WTC11 (cell line): ENCODE measurements at regions of chr11 and their contacts with region 1.

Region 1: DNA sequence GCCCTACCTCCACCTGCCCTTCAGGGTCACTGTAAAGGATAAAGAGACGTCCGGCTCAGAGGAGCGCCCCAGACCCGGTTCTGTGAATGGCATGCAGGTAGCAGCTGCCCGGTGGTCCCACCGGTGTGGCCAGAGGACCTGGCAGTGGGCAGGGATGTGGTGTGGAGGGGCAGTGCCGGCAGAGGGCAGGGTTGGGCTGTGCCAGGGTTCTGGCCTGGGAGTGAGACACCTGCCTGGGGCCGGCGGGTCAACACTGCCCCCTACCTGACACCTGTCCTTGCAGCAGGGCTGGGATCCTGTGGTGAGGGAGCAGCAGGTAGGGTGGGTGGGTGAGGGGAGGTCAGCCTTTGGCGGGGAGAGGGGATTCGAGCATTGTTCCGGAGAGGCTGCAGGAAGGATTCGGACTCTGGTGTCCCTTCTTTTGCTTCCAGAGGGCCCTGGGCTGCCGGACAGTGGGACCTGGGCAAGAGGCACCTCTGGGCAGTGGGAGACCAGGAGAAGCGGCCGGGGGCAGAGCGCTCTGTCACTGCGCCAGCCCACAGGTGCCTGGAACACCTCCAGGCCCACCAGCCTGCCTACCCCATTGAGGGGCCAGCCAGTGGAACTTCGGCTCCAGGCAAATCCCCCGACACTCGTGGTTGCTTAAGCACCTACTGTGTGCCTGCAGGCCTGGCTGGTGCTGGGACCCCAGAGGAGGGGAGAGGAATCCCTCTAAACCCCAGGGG is 1.6 kb upstream of the PHLDA2 start:
- DNase-seq: peak; percentile 95
- ATAC-seq: peak; percentile 86
- H3K4me3 Mint-ChIP-seq: peak overlapping the region; percentile 72
- H3K27ac Mint-ChIP-seq: no peak overlapping the region
- H3K4me1 Mint-ChIP-seq: peaks cover 7% of the 10 kb centered on the region
- H3K27me3 Mint-ChIP-seq: peaks cover 42% of the 10 kb centered on the region
- CTCF ChIP-seq: peak; percentile 76

Region 2: DNA sequence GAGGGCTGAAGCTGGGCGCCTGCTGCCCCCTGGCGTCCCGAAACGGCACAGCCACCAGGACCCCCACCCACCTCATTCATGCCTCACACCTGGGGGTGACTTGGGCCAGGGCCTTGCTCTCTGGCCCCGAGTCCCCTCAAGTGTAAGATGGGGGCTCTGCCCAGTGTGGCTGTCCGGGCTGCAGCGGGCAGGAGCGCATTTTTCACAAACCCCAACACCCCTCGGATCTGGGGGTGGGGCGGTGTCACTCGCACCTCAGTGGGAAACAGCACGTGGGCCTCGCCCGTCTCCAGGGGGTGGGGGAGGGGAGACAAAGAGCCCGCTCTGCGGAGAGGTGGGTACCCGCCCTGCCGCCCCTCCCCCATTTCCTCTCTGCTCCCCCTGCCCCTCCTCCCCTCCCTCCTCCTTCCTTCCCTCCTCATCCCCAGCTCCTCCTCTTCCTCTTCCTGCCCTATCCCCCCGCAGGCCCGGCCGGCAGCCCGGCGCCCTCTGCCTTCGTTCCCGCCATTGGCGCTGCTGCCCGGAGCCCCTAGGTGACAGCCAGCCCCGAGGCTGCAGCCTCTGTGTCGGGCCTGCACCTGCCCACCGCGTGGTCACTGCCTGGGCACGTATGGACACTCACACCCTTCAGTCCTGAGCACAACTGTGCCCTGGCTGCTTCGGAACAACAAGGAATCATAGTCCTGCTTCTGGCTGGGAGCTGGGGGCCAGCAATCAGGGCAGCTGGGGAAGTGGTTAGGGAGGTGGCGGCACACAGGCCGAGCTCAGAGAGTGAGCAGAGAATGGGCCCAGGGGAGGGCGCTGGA is 38.4 kb before region 1 on chr11:
- CTCF ChIA-PET with region 1: interaction called, 68 read pairs
- POLR2A ChIA-PET with region 1: interaction called, 10 read pairs
- DNase-seq: peak; percentile 84
- ATAC-seq: peak; percentile 67
- H3K4me3 Mint-ChIP-seq: peak overlapping the region; percentile 68
- H3K27ac Mint-ChIP-seq: 0 out of 2 replicates have a peak overlapping the region, but pooled peaks have one; percentile 23
- H3K4me1 Mint-ChIP-seq: peaks cover 11% of the 10 kb centered on the region
- H3K27me3 Mint-ChIP-seq: peaks cover 56% of the 10 kb centered on the region
- CTCF ChIP-seq: peak; percentile 93

Region 3: GRCh38 chr11:2901854-2902783 is 28.7 kb before region 1 on chr11:
- CTCF ChIA-PET with region 1: interaction called, 19 read pairs
- POLR2A ChIA-PET with region 1: interaction called, 4 read pairs
- DNase-seq: peak; percentile 97
- ATAC-seq: peak; percentile 89
- H3K4me3 Mint-ChIP-seq: peak overlapping the region; percentile 66
- H3K27ac Mint-ChIP-seq: no peak overlapping the region
- H3K4me1 Mint-ChIP-seq: peaks cover 30% of the 10 kb centered on the region
- H3K27me3 Mint-ChIP-seq: peaks cover 59% of the 10 kb centered on the region
- CTCF ChIP-seq: no peak

Region 4: GRCh38 chr11:2945031-2945756 is 14.3 kb after region 1 on chr11:
- CTCF ChIA-PET with region 1: interaction called, 23 read pairs
- POLR2A ChIA-PET with region 1: interaction called, 5 read pairs
- DNase-seq: peak; percentile 76
- ATAC-seq: peak; percentile 78
- H3K4me3 Mint-ChIP-seq: peak overlapping the region; percentile 10; the same call in 1 of the 2 replicates
- H3K27ac Mint-ChIP-seq: peak overlapping the region; percentile 55; the same call in 1 of the 2 replicates
- H3K4me1 Mint-ChIP-seq: peaks cover 37% of the 10 kb centered on the region
- H3K27me3 Mint-ChIP-seq: no peaks in the 10 kb centered on the region
- CTCF ChIP-seq: no peak

Region 5: DNA sequence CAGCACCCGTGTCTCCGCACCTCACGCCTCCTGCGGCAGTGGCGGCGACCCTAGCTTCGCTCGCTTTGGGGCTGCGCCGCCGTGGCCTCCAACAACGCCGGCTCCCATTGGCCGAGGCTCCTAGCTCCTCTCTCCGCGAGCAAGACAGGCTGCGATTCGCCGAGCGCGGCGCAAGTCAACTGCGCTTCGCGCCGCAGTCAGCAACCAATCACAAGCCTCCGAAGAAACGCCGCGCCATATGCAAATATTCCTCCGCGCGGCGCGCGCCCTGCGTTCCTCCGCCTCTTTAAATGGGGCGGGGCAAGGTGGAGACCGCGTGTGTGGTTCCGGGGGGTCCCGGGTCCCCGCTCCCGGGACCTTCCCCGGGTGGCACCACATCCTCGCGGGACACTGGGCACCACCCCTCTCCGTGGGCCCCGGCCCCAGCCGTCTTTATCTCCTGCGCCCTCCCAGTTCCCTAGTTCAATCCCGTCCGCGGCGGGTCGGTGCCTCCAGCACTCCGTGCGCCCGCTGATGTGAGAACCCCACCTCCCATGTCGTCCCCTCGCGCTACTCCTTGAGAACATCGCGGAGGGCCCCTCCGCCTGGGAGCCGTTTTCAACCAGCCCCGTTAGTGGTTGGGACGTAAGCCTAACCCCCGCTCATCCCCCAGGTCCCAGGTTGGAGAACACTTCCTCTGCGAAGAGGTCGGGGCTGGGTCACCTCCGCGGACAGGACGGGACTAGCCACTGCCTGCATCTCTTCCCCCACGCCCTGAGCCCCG is 61.5 kb after region 1 on chr11 and contains the start of gene NAP1L4:
- CTCF ChIA-PET with region 1: interaction called, 11 read pairs
- POLR2A ChIA-PET with region 1: interaction called, 3 read pairs
- DNase-seq: peak; percentile 97
- ATAC-seq: peak; percentile 84
- H3K4me3 Mint-ChIP-seq: peak within 1 kb of the TSS; percentile 99
- H3K27ac Mint-ChIP-seq: peak within 1 kb of the TSS; percentile 94
- H3K4me1 Mint-ChIP-seq: peaks cover 36% of the 10 kb centered on the region
- H3K27me3 Mint-ChIP-seq: no peaks in the 10 kb centered on the region; the same call in 1 of the 2 replicates
- CTCF ChIP-seq: no peak
- total RNA-seq, gene NAP1L4: 160 to 189 TPM (median 181 TPM) in 3 replicates